ENCODE measurements at regions of chr10 and their contacts with region 1.

Region 1: DNA sequence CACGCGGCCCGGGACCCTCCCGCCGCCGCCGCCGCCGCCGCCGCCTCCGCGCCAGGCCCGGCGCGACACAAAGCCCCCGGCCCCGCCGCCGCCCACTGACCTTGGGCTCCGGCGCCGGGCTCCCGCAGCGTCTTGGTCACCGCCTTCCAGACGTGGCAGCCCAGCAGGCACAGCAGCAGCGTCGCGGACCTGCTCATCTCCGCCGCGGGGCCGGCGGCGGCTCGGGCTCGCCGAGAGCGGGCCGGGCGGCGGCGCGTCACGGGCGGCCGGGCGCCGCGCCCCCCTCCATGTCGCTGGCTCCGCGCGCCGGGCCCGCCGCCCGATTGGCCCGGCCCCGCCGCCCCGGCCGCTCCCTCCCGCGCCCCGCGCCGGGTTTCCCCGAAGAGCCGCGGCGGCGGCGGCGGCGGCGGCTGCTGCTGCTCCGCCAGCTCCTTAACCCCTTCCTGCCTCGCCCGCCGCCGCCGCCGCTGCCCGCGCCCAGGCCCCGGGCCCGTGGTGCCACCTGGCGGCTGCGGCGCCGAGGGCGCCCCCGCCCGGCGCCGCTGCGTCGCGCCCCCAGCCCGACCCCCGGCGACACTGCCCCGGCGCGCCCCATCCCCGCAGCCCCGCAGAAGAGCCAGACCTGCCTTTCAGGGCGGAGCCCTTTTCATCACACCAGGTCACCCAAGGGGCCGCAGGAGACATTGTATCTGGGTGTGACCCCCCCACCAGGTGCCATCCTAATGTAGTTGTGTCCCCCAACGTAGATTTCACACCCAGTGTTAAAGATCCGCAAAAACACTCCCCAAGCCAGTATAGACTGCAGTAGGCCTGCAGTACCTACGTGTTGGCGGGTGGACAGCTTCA is at the start of gene FAM171A1:
- DNase-seq: peak; percentile 74
- ATAC-seq: peak; percentile 83
- total RNA-seq, gene FAM171A1: 10.3 TPM

Region 2: DNA sequence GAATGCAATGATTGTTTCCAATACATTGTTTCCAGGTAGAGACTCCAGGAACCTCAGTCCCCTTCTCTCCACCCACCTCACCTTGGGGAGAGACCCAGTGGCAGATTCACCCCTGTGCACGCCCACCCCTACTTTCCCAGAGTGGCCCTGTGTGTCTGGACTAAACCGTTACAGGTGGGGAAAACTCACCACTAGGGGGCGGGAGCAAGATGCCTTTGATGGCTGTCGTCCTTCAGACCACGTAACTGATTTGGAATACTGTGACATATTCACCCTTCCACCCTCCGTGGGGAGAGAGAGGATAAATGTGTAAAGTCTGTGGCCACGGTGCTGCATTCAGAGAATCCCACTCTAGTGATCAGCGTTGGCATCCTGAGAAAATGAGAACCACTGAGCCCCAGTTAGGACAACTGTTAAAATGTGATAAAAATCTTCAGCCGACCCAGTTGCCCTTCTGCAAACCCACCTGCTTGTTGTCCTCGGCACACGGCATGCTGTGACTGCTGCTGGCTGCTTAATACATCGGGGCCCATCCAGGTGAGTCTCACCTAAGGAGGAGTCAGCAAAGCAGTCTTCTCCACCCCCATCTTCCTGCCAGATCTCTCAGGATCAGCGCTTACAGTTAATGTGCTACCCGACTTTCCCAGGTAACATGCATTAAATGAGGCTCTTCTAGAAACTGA is 161.1 kb before region 1 on chr10:
- intact Hi-C with region 1: loop called (anchors 5 kb)
- DNase-seq: peak; percentile 79
- ATAC-seq: peak; percentile 95

Region 3: DNA sequence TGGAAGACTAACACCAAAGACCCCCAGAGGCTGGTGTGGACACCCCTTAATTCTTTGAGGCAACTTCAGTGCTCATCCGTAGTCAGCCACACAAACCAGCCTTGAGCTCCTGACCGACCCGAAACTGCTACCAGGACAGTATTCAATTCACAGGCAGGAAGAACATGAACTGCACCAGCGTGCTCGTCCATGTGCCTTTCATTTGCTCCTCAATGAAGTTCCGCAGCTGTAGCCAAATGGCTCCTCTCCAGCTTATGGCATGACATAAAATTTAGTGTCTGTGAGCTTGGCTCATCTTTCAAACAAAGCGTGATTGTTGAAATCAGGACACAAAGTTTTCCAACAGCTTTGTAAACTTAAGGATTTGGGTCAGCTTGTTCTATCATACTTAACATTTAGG is 144.1 kb after region 1 on chr10:
- intact Hi-C with region 1: no loop called
- DNase-seq: peak; percentile 48
- ATAC-seq: no peak

Region 4: GRCh38 chr10:16195178-16195769 is 824.2 kb after region 1 on chr10:
- intact Hi-C with region 1: no loop called
- DNase-seq: no peak
- ATAC-seq: no peak

Measured in Right ventricle myocardium superior (tissue), 1 donor.